ENCODE measurements at regions of chr10 and their contacts with region 1.

Region 1: GRCh38 chr10:18214691-18215563 is 74.7 kb downstream of the CACNB2 start:
- DNase-seq: peak; percentile 71
- H3K4me3 Mint-ChIP-seq: no peak overlapping the region
- H3K27ac Mint-ChIP-seq: no peak overlapping the region
- H3K4me1 Mint-ChIP-seq: no peaks in the 10 kb centered on the region
- H3K27me3 Mint-ChIP-seq: no peaks in the 10 kb centered on the region
- CTCF ChIP-seq: peak; percentile 90

Region 2: DNA sequence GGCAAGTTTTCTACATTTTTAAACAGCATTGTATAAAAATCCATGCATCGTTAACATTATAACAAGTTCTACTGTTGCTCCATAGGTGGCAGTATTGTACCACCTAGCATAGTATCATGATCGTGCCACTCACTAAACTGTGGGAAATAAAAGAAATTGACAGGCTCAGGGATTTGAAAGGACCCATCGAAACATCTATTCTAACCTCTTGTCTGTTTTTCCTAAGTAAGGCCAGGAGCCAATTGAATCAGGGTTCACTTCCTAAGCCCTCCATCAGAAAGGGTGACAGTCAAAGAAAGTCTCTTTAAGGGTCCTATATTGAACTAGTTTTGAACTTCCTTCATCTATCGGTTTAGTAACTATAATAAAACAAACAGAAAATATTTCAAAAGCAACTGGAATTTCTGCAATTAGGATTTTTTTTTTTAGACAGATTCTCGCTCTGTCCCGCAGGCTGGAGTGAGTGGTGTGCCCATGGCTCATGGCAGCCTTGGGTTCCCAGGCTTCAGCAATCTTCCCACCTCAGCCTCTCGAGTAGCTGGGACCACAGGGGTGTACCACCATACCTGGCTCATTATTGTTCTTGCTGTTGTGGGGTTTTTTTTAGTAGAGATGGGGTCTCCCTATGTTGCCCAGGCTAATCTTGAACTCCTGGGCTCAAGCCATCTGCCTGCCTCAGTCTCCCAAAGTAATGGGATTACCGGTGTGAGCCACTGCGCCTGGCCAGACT is 607.2 kb before region 1 on chr10:
- CTCF ChIA-PET with region 1: interaction called, 8 read pairs
- POLR2A ChIA-PET with region 1: no interaction called
- intact Hi-C with region 1: loop called (anchors 1 kb)
- DNase-seq: peak; percentile 70
- H3K4me3 Mint-ChIP-seq: no peak overlapping the region
- H3K27ac Mint-ChIP-seq: no peak overlapping the region
- H3K4me1 Mint-ChIP-seq: peaks cover 6% of the 10 kb centered on the region
- H3K27me3 Mint-ChIP-seq: no peaks in the 10 kb centered on the region
- CTCF ChIP-seq: peak; percentile 66

Region 3: DNA sequence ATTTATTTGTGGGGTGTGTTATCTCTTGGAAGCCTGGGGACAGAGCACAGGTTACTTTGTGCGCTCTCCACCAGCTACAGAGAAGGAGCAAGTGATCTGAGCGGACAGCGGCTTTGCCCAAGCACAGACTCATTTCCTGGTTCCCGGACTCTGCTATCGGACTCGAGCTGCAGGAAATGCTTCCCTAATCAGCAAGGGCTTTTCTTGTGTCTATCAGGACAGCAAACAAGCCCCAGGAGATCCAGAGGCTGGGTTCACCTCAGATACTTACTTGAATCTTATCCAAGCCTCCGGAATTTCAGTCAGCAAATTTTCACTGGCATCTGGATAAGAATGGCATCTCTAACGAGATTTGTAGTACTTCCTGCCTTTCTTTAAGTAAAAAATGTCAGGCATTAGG is 378.0 kb before region 1 on chr10:
- CTCF ChIA-PET with region 1: interaction called, 10 read pairs
- POLR2A ChIA-PET with region 1: no interaction called
- intact Hi-C with region 1: no loop called
- DNase-seq: peak; percentile 22
- H3K4me3 Mint-ChIP-seq: no peak overlapping the region
- H3K27ac Mint-ChIP-seq: no peak overlapping the region
- H3K4me1 Mint-ChIP-seq: peaks cover 25% of the 10 kb centered on the region
- H3K27me3 Mint-ChIP-seq: no peaks in the 10 kb centered on the region
- CTCF ChIP-seq: no peak

Region 4: DNA sequence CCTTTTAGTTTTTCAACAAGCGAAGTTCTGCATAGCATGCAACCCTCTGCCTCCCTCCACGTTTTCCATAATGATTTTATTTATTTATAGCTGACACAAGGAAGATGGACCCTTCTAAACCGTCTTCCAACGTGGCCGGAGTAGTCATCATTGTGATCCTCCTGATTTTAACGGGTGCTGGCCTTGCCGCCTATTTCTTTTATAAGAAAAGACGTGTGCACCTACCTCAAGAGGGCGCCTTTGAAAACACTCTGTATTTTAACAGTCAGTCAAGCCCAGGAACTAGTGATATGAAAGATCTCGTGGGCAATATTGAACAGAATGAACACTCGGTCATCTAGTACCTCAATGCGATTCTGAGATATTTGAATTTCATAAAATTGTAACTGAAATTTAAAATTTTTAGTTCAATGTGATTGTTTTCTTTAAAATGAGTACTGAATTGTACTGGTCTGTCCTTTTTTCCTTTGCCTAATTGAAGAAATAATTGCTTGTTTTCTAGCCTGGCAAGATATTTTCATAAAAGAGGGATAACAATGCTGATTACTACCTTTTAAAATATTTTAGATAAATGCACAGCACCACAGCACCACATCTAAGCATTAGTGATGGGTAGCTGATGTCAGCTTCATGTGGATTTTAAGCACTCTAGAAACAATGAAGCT is 304.7 kb before region 1 on chr10:
- CTCF ChIA-PET with region 1: interaction called, 17 read pairs
- POLR2A ChIA-PET with region 1: interaction called, 4 read pairs
- intact Hi-C with region 1: loop called (anchors 1 kb)
- DNase-seq: peak; percentile 74
- H3K4me3 Mint-ChIP-seq: no peak overlapping the region
- H3K27ac Mint-ChIP-seq: no peak overlapping the region
- H3K4me1 Mint-ChIP-seq: peaks cover 19% of the 10 kb centered on the region
- H3K27me3 Mint-ChIP-seq: no peaks in the 10 kb centered on the region
- CTCF ChIP-seq: peak; percentile 54

Region 5: DNA sequence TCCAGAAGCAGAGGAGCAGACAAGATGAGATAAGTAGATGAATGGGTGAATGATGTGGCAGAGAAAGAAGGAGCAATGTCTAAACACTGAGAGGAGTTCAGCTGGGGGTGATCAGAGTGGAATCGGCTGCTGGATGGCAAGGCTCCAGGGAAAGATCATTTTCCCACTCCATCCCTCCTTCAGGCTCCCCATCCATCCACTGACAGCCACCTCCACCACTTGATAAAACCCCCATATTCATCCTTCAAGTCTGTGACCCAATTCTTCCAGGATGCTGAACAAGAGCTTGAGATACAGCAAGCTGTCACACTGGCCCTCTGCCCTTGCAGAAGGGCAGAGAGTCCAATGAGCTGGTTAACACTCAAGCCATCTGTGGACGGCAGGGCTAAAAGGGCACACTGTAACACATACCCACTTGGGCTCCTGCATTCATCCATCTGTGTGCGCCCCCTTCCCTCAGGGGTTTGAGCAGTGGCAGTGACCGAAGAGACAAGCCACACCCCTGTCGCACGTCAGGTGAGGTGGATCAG is 105.5 kb before region 1 on chr10:
- CTCF ChIA-PET with region 1: interaction called, 10 read pairs
- POLR2A ChIA-PET with region 1: no interaction called
- intact Hi-C with region 1: loop called (anchors 2 kb)
- DNase-seq: no peak
- H3K4me3 Mint-ChIP-seq: no peak overlapping the region
- H3K27ac Mint-ChIP-seq: no peak overlapping the region
- H3K4me1 Mint-ChIP-seq: no peaks in the 10 kb centered on the region
- H3K27me3 Mint-ChIP-seq: no peaks in the 10 kb centered on the region
- CTCF ChIP-seq: no peak

Region 6: DNA sequence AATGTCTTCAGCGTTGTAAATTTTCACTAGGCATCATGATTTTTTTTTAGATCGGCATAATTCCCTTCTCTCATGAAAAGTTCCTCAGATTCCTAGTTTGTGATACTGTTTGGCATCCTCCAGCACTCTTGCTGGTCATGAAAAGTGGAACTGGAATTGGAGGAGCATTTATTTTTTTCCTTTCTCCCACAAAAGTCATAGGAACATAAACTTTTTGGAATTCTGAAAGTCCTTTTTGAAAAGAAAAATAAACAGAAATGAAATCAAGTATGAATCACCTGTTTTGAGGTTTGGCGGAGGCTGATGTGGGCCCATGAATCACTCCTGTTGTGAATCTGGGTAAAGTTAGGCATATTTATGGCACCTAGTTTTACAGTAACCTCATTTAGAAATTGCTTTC is 57.0 kb before region 1 on chr10:
- CTCF ChIA-PET with region 1: interaction called, 10 read pairs
- POLR2A ChIA-PET with region 1: interaction called, 7 read pairs
- intact Hi-C with region 1: loop called (anchors 5 kb)
- DNase-seq: peak; percentile 85
- H3K4me3 Mint-ChIP-seq: peak overlapping the region; percentile 53
- H3K27ac Mint-ChIP-seq: peak overlapping the region; percentile 84
- H3K4me1 Mint-ChIP-seq: peaks cover 28% of the 10 kb centered on the region
- H3K27me3 Mint-ChIP-seq: no peaks in the 10 kb centered on the region
- CTCF ChIP-seq: no peak

Region 7: GRCh38 chr10:18312374-18313139 is 97.6 kb after region 1 on chr10:
- CTCF ChIA-PET with region 1: interaction called, 19 read pairs
- POLR2A ChIA-PET with region 1: no interaction called
- intact Hi-C with region 1: loop called (anchors 1 kb)
- DNase-seq: peak; percentile 43
- H3K4me3 Mint-ChIP-seq: no peak overlapping the region
- H3K27ac Mint-ChIP-seq: no peak overlapping the region
- H3K4me1 Mint-ChIP-seq: peaks cover 6% of the 10 kb centered on the region
- H3K27me3 Mint-ChIP-seq: no peaks in the 10 kb centered on the region
- CTCF ChIP-seq: peak; percentile 55

Region 8: GRCh38 chr10:18364987-18365775 is 150.3 kb after region 1 on chr10:
- CTCF ChIA-PET with region 1: no interaction called
- POLR2A ChIA-PET with region 1: no interaction called
- intact Hi-C with region 1: no loop called
- DNase-seq: no peak
- H3K4me3 Mint-ChIP-seq: no peak overlapping the region
- H3K27ac Mint-ChIP-seq: no peak overlapping the region
- H3K4me1 Mint-ChIP-seq: no peaks in the 10 kb centered on the region
- H3K27me3 Mint-ChIP-seq: no peaks in the 10 kb centered on the region
- CTCF ChIP-seq: no peak

Region 9: DNA sequence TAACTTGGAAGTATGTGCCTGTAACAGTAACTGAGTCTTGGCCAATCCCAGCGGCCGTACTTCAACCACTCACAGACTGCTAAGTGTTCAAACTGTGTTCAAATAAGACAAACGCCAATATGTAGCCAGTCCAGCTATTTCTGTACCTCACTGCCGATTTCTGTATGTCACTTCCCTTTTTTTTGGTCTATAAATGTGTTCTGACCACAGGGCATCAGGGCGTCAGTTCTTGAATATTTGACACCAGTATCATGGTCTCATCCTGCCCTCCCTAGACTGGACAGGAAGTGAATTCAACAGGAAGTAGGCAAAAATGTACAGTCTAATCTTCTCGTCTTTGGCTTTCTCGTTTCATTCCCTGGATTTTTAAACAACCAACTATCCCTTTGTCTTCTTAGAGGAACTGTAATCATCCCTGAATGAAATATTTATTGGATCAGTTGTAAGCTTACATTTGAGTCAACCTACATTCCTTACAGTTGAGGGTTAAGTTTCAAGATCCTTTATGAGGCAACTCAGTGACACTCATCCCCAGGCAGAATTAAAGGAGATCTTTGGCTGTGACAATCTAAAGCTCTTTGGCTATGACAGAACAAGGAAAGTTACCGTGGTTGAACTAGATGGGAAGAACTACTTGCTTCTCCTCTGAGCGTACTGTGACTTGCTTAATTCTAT is 203.8 kb after region 1 on chr10:
- CTCF ChIA-PET with region 1: no interaction called
- POLR2A ChIA-PET with region 1: no interaction called
- intact Hi-C with region 1: no loop called
- DNase-seq: no peak
- H3K4me3 Mint-ChIP-seq: no peak overlapping the region
- H3K27ac Mint-ChIP-seq: no peak overlapping the region
- H3K4me1 Mint-ChIP-seq: no peaks in the 10 kb centered on the region
- H3K27me3 Mint-ChIP-seq: no peaks in the 10 kb centered on the region
- CTCF ChIP-seq: no peak